ENCODE measurements at regions of chr19 and their contacts with region 1.

Region 1: GRCh38 chr19:51926784-51927742 is at the start of gene ZNF613:
- DNase-seq: peak; percentile 89
- ATAC-seq: peak; percentile 93
- H3K4me3 ChIP-seq: peak within 1 kb of the TSS; percentile 88 to 98 (median 96)
- H3K27ac ChIP-seq: peak within 1 kb of the TSS; percentile 87
- H3K4me1 ChIP-seq: peaks cover 32% of the 10 kb centered on the region
- H3K27me3 ChIP-seq: no peaks in the 10 kb centered on the region; a peak in 1 of 5 replicates
- CTCF ChIP-seq: peak; percentile 62
- EP300 ChIP-seq: no peak
- POLR2A ChIP-seq: peak in 1 of 2 experiments; percentile 46; a peak in 2 of 4 replicates
- RAD21 ChIP-seq: peak; percentile 33; the same call in 1 of the 2 replicates
- total RNA-seq, gene ZNF613: 8.3 and 9.6 TPM in 2 replicates

Region 2: DNA sequence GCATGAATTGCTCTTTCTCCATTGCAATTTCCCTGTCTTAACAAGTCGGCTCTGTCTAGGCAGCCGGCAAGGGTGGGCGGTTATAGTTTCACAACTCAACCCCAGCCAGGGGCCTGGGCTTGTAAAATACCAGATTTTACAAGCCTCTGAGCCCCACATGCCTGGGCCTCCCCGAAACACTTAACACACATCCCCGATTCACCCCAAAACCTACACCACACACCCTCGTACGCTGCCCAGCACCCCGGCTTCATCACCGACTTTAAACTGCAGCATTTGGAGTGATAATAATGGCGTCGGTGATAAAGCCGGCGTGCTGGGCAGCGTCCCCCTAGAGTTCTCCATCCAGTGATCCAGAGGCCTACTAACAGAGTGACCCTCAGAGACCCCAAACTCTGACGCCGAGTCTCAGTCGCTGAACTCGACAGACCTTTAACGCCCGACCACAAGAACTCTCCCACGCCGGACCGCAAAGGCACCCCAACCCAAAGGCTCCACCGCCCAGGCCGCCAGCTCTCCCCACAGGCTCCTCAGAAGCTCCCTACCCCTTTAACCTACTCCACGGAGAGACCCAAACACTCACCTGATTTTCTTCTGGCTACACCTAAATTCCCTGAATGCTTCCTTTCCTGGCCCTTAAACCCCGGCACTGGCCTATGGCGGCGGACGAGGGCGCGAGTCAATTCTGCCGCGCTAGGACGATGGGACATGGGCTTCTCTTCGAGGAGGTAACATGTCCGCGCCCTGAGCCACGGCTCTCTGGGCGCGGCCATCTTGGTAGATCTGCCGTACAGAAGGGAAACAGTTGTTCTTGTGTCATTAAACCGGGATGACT is 22.5 kb before region 1 on chr19 and contains the start of gene ZNF649:
- CTCF ChIA-PET with region 1: no interaction called
- POLR2A ChIA-PET with region 1: no interaction called
- in situ Hi-C with region 1: no loop called
- intact Hi-C with region 1: loop called (anchors 2 kb)
- DNase-seq: peak; percentile 83
- ATAC-seq: peak; percentile 99
- H3K4me3 ChIP-seq: peak within 1 kb of the TSS; percentile 62 to 92 (median 88)
- H3K27ac ChIP-seq: peak within 1 kb of the TSS; percentile 79
- H3K4me1 ChIP-seq: peaks cover 32% of the 10 kb centered on the region
- H3K27me3 ChIP-seq: no peaks in the 10 kb centered on the region; a peak in 1 of 5 replicates
- CTCF ChIP-seq: peak; percentile 59
- EP300 ChIP-seq: no peak
- POLR2A ChIP-seq: peak; percentile 59 to 69
- RAD21 ChIP-seq: 0 out of 2 replicates have a peak, but pooled peaks have one; percentile 4
- total RNA-seq, gene ZNF649: 13.4 and 13.9 TPM in 2 replicates

Region 3: GRCh38 chr19:51916167-51916566 is 10.9 kb before region 1 on chr19:
- CTCF ChIA-PET with region 1: no interaction called
- POLR2A ChIA-PET with region 1: no interaction called
- in situ Hi-C with region 1: no loop called
- intact Hi-C with region 1: no loop called
- DNase-seq: no peak
- ATAC-seq: no peak
- H3K4me3 ChIP-seq: no peak overlapping the region
- H3K27ac ChIP-seq: no peak overlapping the region
- H3K4me1 ChIP-seq: no peaks in the 10 kb centered on the region
- H3K27me3 ChIP-seq: no peaks in the 10 kb centered on the region
- CTCF ChIP-seq: no peak
- EP300 ChIP-seq: no peak
- POLR2A ChIP-seq: no peak
- RAD21 ChIP-seq: no peak

Region 4: GRCh38 chr19:52007806-52008557 is 80.9 kb after region 1 on chr19 and contains the start of gene ZNF615:
- CTCF ChIA-PET with region 1: no interaction called
- POLR2A ChIA-PET with region 1: no interaction called
- in situ Hi-C with region 1: no loop called
- intact Hi-C with region 1: loop called (anchors 10 kb)
- DNase-seq: peak; percentile 76
- ATAC-seq: peak; percentile 96
- H3K4me3 ChIP-seq: peak within 1 kb of the TSS; percentile 67 to 100 (median 91)
- H3K27ac ChIP-seq: peak within 1 kb of the TSS; percentile 70
- H3K4me1 ChIP-seq: peaks cover 18% of the 10 kb centered on the region
- H3K27me3 ChIP-seq: no peaks in the 10 kb centered on the region; a peak in 1 of 5 replicates
- CTCF ChIP-seq: no peak
- EP300 ChIP-seq: no peak
- POLR2A ChIP-seq: peak; percentile 37 to 81; a peak in 3 of 4 replicates
- RAD21 ChIP-seq: 0 out of 2 replicates have a peak, but pooled peaks have one; percentile 30
- total RNA-seq, gene ZNF615: 7.8 and 13.9 TPM in 2 replicates

Measured in HepG2 (cell line).